Ovary (tissue), 10 donors: ENCODE measurements at regions of chr6 and their contacts with region 1.

Region 1: GRCh38 chr6:32838114-32838958 is at the start of gene TAP2:
- DNase-seq: peak; percentile 94 to 98 (median 97)
- H3K4me3 ChIP-seq: peak within 1 kb of the TSS; percentile 92
- H3K27ac ChIP-seq: peak within 1 kb of the TSS; percentile 79 to 95
- H3K4me1 ChIP-seq: peaks cover 9% of the 10 kb centered on the region
- H3K27me3 ChIP-seq: no peaks in the 10 kb centered on the region
- CTCF ChIP-seq: peak; percentile 95 to 99 (median 98)
- EP300 ChIP-seq: no peak
- POLR2A ChIP-seq: peak; percentile 54
- total RNA-seq, gene TAP2: 8.9 to 23.8 (median 18.6) TPM

Region 2: DNA sequence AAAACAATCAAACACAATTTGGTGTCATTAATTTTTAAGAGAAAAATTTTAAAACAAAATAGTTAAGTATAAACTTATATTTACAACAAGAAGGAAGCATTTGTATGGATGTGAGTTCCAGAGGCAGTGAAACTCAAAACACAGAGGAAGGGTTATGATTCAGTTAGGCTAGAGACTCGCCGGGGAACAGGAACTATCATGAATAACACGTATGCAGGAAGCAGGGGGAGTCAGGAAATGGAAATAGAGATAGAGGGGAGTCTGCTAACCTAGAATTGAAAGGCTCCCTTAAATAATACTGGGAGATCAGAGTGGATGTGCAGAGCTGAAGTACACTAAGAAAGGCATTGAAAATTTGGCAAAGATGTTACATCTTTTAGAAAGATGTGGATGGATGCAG is 234.4 kb before region 1 on chr6:
- intact Hi-C with region 1: no loop called
- DNase-seq: no peak
- H3K4me3 ChIP-seq: no peak overlapping the region
- H3K27ac ChIP-seq: no peak overlapping the region
- H3K4me1 ChIP-seq: no peaks in the 10 kb centered on the region
- H3K27me3 ChIP-seq: no peaks in the 10 kb centered on the region
- CTCF ChIP-seq: no peak
- EP300 ChIP-seq: no peak
- POLR2A ChIP-seq: no peak

Region 3: DNA sequence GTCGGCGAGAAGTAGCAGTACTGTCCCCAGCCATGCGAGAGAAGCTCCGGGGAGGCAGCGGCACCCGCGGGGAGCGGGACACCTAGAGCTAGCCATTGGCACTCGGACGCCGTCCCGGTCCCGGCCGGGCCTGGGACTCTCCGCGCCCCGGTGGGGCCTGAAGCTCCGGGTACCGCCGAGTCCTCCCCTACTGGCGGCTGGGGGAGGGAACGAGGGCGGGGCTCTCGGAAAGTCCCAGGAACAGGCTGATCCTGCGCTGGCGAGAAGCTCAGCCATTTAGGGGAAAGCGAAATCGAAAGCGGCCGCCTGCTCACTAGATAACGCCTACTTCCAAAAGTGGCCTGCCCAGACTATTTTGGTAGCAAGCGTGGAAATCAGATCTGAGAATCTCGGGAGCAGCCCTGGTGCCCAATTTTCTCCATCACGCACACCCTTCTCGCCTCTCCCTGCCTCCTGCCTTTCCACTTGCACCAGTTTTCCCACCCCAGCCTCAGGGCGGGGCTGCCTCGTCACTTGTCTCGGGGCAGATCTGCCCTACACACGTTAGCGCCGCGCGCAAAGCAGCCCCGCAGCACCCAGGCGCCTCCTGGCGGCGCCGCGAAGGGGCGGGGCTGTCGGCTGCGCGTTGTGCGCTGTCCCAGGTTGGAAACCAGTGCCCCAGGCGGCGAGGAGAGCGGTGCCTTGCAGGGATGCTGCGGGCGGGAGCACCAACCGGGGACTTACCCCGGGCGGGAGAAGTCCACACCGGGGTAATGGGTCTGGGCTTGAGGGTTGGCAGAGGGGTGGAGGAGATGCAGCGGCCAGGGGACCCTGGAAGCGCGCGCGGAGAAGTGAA is 15.4 kb after region 1 on chr6 and contains the starts of genes PSMB9 and TAP1:
- intact Hi-C with region 1: loop called in 1 of 4 experiments (anchors 2 kb)
- DNase-seq: peak; percentile 91 to 96 (median 93)
- H3K4me3 ChIP-seq: peak within 1 kb of the TSS; percentile 94
- H3K27ac ChIP-seq: peak within 1 kb of the TSS; percentile 98
- H3K4me1 ChIP-seq: peaks cover 10% of the 10 kb centered on the region
- H3K27me3 ChIP-seq: no peaks in the 10 kb centered on the region
- CTCF ChIP-seq: peak; percentile 75 to 93 (median 91)
- EP300 ChIP-seq: peak; percentile 87
- POLR2A ChIP-seq: peak; percentile 92
- total RNA-seq, gene PSMB9: 9.5 to 28.3 (median 20.4) TPM
- total RNA-seq, gene TAP1: 17.7 to 30.7 (median 23.3) TPM

Region 4: GRCh38 chr6:32868257-32868788 is 30.0 kb after region 1 on chr6:
- intact Hi-C with region 1: loop called in 2 of 4 experiments (anchors 5 kb)
- DNase-seq: peak; percentile 78 to 88 (median 86)
- H3K4me3 ChIP-seq: no peak overlapping the region
- H3K27ac ChIP-seq: no peak overlapping the region
- H3K4me1 ChIP-seq: no peaks in the 10 kb centered on the region
- H3K27me3 ChIP-seq: no peaks in the 10 kb centered on the region
- CTCF ChIP-seq: peak; percentile 83 to 94 (median 91)
- EP300 ChIP-seq: no peak
- POLR2A ChIP-seq: no peak

Region 5: DNA sequence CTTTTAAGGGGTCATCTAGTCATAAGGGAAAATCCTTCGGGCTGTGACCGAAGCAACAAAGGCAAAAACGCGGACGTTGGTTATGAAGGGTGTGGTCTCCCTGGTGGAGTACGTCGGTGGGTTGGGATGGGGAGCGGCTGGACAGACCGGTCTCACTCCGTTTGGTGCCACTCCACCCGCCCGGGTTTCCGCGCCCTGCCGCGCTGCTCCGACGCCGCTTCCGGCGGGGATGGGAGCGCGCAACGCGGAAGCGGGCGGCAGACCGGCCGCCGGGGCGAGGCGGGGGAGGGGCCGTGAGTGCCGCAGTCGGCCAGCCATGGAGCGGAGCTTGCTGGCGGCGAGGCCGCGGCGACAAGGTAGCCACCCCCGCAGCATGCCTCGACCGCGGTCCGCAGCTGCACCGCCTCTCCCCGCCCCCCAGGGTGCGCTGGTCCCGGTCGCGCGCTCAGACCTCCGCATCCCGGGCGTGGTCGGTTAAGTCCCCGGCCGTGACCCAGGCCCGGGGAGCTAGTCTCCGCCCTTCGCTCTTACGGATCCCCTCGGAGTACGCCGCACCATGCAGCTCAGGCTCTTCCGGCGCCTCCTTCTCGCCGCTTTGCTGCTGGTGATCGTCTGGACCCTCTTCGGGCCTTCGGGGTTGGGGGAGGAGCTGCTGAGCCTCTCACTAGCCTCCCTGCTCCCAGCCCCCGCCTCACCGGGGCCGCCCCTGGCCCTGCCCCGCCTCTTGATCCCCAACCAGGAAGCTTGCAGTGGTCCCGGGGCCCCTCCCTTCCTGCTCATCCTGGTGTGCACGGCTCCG is 438.7 kb after region 1 on chr6 and contains the start of gene B3GALT4:
- intact Hi-C with region 1: no loop called
- DNase-seq: peak; percentile 70 to 82 (median 75)
- H3K4me3 ChIP-seq: peak within 1 kb of the TSS; percentile 52
- H3K27ac ChIP-seq: peak within 1 kb of the TSS; percentile 11 to 79
- H3K4me1 ChIP-seq: peaks cover 3% of the 10 kb centered on the region
- H3K27me3 ChIP-seq: no peaks in the 10 kb centered on the region
- CTCF ChIP-seq: peak; percentile 37 to 69 (median 52)
- EP300 ChIP-seq: no peak
- POLR2A ChIP-seq: no peak
- total RNA-seq, gene B3GALT4: 4.3 to 10.6 (median 6.9) TPM